ENCODE measurements at regions of chr18 and their contacts with region 1.

Region 1: GRCh38 chr18:23131693-23132319 is 3.5 kb upstream of the CABLES1 start:
- DNase-seq: peak; percentile 77
- H3K4me3 ChIP-seq: no peak overlapping the region
- H3K27ac ChIP-seq: no peak overlapping the region
- H3K4me1 ChIP-seq: no peaks in the 10 kb centered on the region
- H3K27me3 ChIP-seq: no peaks in the 10 kb centered on the region
- CTCF ChIP-seq: peak; percentile 76 to 86 (median 81)
- POLR2A ChIP-seq: no peak

Region 2: DNA sequence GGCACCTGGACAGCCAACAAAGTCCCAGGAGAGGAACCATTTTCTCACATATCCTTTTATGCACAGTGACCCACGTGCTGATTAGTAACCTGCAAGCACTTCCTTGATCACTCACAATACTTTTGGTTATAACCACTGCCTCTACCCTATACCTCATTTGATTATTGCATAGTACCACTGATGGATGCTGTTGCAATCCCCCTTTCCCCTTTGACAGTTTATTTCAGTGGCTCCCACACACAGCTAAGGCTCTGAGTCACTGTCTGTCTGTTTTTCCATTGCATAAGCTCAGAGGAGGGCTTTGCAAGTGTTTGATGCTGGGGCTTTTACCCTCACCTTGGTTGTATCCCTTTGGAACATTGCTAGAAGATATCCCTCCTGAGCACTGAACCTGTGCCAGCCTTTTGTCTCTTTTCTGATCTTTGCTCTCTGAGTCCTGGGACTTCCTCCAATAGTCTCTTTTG is 300.3 kb before region 1 on chr18:
- intact Hi-C with region 1: no loop called
- DNase-seq: no peak
- H3K4me3 ChIP-seq: no peak overlapping the region
- H3K27ac ChIP-seq: no peak overlapping the region
- H3K4me1 ChIP-seq: no peaks in the 10 kb centered on the region
- H3K27me3 ChIP-seq: no peaks in the 10 kb centered on the region
- CTCF ChIP-seq: no peak
- POLR2A ChIP-seq: no peak

Region 3: DNA sequence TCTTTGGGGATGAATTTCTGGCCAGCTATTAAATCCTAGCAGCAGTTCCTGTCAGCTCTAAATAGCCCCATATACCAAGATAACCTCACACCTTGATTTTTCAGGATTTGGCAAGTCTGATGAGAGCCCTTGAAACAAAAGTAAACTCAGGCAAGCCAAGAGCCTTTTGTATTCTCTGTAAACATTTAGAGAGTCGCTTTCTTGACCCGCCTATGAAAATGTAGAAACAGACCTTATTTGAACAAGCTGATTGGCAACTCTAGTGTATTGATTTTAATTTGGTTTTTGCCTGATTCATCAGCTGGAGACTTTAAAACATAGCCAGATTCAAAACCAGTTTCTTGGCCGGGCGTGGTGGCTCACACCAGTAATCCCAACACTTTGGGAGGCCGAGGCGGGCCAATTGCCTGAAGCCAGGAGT is 46.9 kb after region 1 on chr18:
- intact Hi-C with region 1: no loop called
- DNase-seq: no peak
- H3K4me3 ChIP-seq: no peak overlapping the region
- H3K27ac ChIP-seq: no peak overlapping the region
- H3K4me1 ChIP-seq: no peaks in the 10 kb centered on the region
- H3K27me3 ChIP-seq: no peaks in the 10 kb centered on the region
- CTCF ChIP-seq: no peak
- POLR2A ChIP-seq: no peak

Region 4: DNA sequence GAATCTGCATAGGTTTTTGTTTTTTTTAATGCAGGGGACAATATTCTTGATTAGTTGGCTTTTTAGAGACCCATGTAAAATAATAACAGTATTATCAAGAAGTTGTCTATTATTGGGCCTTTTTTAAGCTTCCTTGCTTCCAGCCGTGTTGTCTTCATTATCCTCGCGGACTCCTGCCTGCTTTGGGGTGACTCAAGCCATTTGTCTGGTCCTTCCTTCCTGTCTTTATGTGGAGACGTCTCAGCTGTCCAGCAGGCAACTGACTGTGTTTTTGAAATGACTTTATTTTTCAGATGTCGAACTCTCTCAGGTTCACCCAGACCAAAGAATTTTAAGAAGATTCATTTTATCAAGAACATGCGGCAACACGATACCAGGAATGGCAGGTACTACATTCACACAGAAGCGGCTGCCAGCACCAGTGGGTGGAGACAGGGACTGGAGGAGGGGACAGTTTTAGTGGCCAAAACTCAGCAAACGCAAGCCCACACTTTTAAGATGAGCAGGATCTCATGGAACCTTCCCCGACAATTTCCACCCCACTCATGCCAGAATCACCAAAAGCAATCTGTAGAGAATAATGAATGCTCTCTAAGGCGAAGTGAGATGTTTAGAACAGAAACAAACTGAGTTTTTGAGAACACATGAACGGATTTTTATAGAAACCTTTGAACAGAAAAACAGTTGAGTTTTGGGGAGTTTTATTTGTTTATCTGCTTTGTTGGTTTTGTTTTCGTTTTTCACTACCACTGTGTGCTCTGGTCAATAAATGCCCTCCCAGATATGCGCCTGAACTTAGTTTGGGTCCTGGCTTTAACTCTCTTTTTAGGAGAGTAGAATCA is 62.6 kb after region 1 on chr18:
- intact Hi-C with region 1: loop called (anchors 5 kb)
- DNase-seq: no peak
- H3K4me3 ChIP-seq: no peak overlapping the region
- H3K27ac ChIP-seq: no peak overlapping the region
- H3K4me1 ChIP-seq: no peaks in the 10 kb centered on the region
- H3K27me3 ChIP-seq: no peaks in the 10 kb centered on the region
- CTCF ChIP-seq: no peak
- POLR2A ChIP-seq: no peak

Region 5: DNA sequence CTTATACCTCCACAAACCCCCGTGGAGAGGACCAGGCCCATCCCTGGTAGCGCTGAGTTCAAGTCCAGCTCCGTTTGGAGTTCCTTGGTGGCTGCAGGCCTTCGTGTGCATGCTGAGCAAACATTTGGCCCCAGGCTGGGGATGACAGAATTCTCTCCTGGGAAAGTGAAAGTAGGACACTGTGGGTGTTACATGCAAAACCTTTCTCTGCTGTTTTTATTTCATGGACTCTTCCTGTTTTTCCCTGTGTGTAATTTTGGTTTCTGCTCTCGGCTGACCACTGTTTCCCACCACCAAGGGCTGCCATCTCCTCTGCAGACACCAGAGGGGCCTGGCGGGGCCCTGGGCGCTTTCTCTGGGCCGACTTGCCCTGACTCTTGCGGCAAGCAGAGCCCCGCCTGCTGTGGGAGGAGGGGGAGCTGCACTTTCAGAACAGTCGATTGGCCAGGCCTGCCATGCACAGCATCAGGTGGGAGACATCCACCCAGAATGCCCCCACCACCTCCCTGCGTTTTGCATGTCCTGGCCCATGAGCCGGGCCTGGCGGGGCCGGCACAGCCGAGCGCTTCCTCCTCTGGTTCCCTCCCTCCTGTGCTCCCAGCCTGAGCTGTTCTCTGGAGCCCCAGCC is 105.8 kb after region 1 on chr18:
- intact Hi-C with region 1: no loop called
- DNase-seq: peak; percentile 12
- H3K4me3 ChIP-seq: peak overlapping the region; percentile 9 to 15
- H3K27ac ChIP-seq: peak overlapping the region; percentile 74 to 79
- H3K4me1 ChIP-seq: peaks cover 3% of the 10 kb centered on the region
- H3K27me3 ChIP-seq: no peaks in the 10 kb centered on the region
- CTCF ChIP-seq: peak in 1 of 4 experiments; percentile 27
- POLR2A ChIP-seq: no peak

Region 6: DNA sequence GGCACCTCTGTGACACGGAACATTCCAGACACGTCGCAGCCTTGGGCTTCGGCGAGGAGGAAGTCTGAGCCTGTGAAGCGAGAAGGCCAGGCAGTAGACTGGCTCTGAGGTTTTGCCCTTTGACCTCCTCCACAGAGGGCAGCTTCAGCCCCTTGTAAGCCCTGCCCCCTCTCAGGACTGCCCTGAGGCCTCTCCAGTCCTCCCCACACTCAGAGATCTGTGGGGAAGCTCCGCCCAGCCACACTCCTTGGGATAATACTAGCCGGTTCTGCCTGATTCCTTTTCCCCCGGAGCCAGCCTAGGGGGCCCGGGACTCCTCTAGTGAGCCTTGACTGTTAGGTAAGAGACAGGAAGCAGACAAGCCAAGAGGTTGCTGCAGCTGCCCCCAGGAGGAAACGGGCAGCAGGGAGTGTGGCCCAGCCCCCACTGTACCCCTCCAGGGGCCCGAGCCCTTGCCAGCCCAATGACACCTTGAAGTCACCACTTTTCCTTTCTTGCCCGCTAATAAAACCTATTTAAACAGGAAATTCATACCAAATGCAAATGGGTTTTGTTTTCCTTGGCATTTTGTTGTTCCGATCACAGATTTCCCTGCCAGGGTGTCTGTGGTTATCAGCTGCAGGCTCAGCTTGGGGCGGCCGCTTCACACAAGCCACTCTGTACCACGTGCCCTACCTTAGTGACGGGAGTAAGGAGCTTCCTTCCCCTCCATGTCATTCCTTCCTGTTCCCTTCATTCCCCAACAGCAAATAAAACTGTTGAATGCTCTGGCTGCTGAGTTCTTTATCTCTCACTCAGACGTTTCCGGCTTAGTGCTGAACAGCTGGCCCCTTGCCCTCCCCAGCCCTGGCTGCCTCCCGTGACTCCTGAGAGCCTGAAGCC is 128.1 kb after region 1 on chr18:
- intact Hi-C with region 1: no loop called
- DNase-seq: peak; percentile 69
- H3K4me3 ChIP-seq: peak overlapping the region in 1 of 2 donors; percentile 7
- H3K27ac ChIP-seq: peak overlapping the region; percentile 51 to 72
- H3K4me1 ChIP-seq: peaks cover 8% of the 10 kb centered on the region
- H3K27me3 ChIP-seq: no peaks in the 10 kb centered on the region
- CTCF ChIP-seq: no peak
- POLR2A ChIP-seq: no peak

Region 7: DNA sequence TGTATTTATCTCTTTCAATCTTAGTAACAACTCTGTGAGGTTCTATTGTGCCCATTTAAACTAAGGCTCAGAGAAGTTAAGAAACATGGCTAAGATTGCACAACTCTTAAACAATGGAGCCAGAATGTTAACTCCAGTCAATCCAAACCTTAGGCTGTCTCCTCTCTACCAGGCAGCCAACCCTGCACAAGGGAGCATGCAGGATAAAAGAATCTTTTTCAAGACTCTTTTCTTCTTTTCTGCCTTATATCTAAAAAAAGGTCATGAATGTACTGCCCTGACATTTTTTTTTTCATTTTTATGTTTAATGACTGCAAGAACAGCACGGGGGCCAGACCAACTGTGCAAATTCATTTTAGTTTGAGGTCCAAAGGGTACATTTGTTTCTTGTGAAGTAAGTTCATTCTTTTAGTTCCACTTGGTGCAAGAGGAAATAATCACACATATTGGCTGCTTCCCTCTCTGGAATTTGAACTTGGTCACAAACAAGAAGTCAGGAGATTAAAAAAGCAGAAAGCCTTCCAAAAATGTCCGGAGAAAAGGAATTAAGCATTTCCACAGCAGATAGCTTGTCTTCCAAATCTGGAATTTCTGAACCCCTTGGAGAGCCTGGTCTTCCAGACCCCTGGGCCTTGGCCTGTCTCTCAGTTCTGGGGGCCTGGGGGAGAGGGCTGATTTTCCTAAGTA is 225.3 kb after region 1 on chr18:
- intact Hi-C with region 1: loop called (anchors 2 kb)
- DNase-seq: no peak
- H3K4me3 ChIP-seq: no peak overlapping the region
- H3K27ac ChIP-seq: no peak overlapping the region
- H3K4me1 ChIP-seq: no peaks in the 10 kb centered on the region
- H3K27me3 ChIP-seq: no peaks in the 10 kb centered on the region
- CTCF ChIP-seq: no peak
- POLR2A ChIP-seq: no peak

Region 8: GRCh38 chr18:23503038-23503962 is 371.5 kb after region 1 on chr18 and contains the start of gene RMC1:
- intact Hi-C with region 1: loop called (anchors 10 kb)
- DNase-seq: peak; percentile 93
- H3K4me3 ChIP-seq: peak within 1 kb of the TSS; percentile 79 to 90
- H3K27ac ChIP-seq: peak within 1 kb of the TSS; percentile 91 to 92
- H3K4me1 ChIP-seq: no peaks in the 10 kb centered on the region
- H3K27me3 ChIP-seq: no peaks in the 10 kb centered on the region
- CTCF ChIP-seq: peak in 2 of 4 experiments; percentile 12 to 32
- POLR2A ChIP-seq: peak; percentile 72
- total RNA-seq, gene RMC1: 12.0 to 28.5 TPM

Measured in prostate gland (tissue), 2 donors.